Head of caudate nucleus (tissue), 42 donors: ENCODE measurements at regions of chrX and their contacts with region 1.

Region 1: GRCh38 chrX:19887911-19888879 is 795 bp upstream of the SH3KBP1 start:
- DNase-seq: peak in 41 of 42 donors; percentile 18 to 78 (median 50)

Region 2: DNA sequence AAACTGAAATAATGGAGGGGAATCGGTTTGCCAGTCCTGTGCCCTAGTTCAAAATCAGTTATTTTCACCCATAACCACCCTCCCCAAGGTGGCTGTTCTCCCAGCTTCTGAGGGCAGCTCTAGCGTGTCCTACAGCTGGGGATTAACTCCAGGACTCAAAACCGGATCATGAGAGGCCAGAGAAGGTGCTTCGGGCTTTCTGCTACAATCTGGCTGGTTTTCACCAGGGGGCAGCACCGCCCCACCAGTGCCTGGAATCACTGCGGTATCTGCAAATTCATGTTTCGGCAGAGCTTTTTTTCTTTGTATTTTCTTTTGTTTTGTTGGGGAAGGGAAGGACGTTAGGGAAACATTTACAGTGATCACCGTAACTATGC is 516.0 kb before region 1 on chrX:
- intact Hi-C with region 1: loop called (anchors 10 kb)
- DNase-seq: peak; percentile 21 to 83 (median 64)

Region 3: GRCh38 chrX:19514791-19515614 is 373.2 kb before region 1 on chrX and contains the start of gene MAP3K15:
- intact Hi-C with region 1: no loop called
- DNase-seq: peak in 1 of 42 donors; percentile 8

Region 4: DNA sequence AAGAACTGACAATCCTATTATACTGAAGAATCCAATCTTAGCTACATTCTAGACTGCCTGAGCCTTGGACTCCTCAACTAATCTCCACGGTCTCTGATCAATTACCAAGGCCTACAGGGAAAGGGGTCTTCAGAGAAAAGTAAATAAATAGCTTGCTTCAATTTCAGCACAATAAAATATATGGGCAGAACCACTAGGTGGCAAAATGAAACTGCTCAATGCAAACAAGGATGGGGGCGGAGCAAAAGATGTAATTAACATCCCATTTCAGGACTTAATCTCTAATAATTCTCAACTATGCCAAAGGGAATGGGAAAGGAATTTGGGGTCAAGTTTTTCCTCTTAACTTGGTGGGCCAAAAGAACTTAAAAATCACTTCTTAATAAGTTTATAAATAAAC is 294.5 kb before region 1 on chrX:
- intact Hi-C with region 1: loop called (anchors 10 kb)
- DNase-seq: peak in 13 of 42 donors; percentile 10 to 65 (median 41)

Region 5: GRCh38 chrX:19739683-19740082 is 148.5 kb before region 1 on chrX:
- intact Hi-C with region 1: loop called (anchors 5 kb)
- DNase-seq: peak in 38 of 42 donors; percentile 13 to 79 (median 51)

Region 6: DNA sequence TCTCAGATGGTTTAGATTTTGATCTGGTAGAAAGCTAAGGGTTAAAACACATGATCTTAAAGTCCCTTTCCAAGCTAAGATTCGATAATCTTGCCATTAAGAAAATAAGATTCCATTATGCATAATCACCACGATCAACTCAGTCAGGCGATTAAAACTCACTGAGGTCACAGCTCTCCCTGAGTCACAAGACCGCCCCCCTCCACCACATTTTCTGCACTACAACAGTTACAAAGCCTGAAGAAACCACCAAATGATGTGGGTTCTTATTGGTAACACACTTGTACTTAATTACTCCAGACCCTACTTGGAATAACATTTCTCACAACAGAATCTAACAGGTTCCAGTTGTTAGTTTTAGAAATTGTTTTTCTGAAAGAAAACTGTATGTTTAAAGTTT is 63.6 kb before region 1 on chrX:
- intact Hi-C with region 1: no loop called
- DNase-seq: no peak

Region 7: DNA sequence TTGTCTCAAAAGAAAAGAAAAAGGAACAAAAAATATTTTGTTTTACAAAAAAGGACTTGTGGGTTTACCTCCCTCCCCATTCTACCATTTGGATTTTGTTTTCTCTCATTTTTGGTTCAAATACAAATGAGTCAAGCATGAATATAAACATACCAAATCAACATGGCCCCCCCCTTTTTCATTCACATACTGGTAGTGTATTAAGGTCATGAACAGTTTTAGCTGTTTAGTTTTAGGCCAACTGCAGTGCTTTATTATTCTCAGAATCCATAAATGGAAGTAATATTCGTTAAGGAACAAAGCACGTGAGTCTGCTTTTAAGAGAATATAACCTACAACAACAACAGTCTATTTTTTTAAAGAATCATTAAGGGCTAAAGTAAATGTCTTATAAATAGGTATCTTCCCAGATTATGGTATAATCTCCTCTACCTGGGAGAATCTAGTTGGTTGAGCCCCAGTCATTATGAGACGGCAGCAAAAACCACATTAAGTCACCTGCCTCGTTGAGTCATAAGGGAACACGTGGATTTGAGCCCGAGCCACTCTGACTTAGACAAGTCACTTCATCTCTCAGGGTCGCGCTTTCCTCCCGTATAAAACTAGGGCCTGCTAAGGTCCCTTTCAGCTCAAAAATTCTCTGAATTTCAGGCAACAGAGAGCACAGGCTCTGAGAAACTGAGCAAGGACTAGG is 76.0 kb after region 1 on chrX:
- intact Hi-C with region 1: no loop called
- DNase-seq: no peak

Region 8: GRCh38 chrX:20101934-20102581 is 213.9 kb after region 1 on chrX:
- intact Hi-C with region 1: no loop called
- DNase-seq: no peak